CD14-positive monocyte (primary cell): ENCODE measurements at regions of chr16 and their contacts with region 1.

Region 1: DNA sequence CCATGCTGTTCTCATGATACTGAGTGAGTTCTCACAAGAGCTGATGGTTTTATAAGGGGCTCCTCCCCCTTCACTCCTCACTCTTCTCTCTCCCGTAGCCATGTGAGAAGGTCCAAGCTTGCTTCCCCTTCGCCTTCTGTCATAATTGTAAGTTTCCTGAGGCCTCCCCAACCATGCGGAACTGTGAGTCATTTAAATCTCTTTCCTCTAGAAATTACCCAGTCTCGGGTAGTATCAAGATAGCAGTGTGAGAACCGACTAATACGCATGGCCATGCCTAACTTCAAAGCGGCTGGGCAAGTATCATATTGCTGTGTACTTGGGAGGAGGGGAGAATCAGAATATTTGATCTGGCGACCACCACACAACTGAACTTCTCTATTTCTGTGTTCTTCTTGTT is 88.3 kb downstream of the PRKCB start:
- DNase-seq: peak; percentile 68 to 90 (median 73)
- H3K4me3 ChIP-seq: no peak overlapping the region
- H3K4me3 Mint-ChIP-seq: peak overlapping the region in 1 of 2 donors; percentile 18
- H3K27ac ChIP-seq: peak overlapping the region in 1 of 2 donors; percentile 63
- H3K27ac Mint-ChIP-seq: peak overlapping the region; percentile 67 to 85 (median 80)
- H3K4me1 ChIP-seq: peaks cover 21 to 27% of the 10 kb centered on the region in 2 donors
- H3K4me1 Mint-ChIP-seq: peaks cover 48% of the 10 kb centered on the region
- H3K27me3 ChIP-seq: no peaks in the 10 kb centered on the region
- H3K27me3 Mint-ChIP-seq: peaks cover 0 to 4% (median 2%) of the 10 kb centered on the region in 3 donors
- CTCF ChIP-seq: no peak

Region 2: GRCh38 chr16:23556881-23557778 is 367.0 kb before region 1 on chr16 and contains the starts of genes EARS2 and UBFD1:
- intact Hi-C with region 1: no loop called
- DNase-seq: peak; percentile 96 to 98 (median 97)
- H3K4me3 ChIP-seq: peak within 1 kb of the TSS; percentile 59 to 87 (median 70)
- H3K4me3 Mint-ChIP-seq: peak within 1 kb of the TSS; percentile 87 to 88
- H3K27ac ChIP-seq: peak within 1 kb of the TSS; percentile 47 to 82
- H3K27ac Mint-ChIP-seq: peak within 1 kb of the TSS; percentile 87 to 95 (median 91)
- H3K4me1 ChIP-seq: peaks cover 15 to 22% of the 10 kb centered on the region in 2 donors
- H3K4me1 Mint-ChIP-seq: peaks cover 21% of the 10 kb centered on the region
- H3K27me3 ChIP-seq: no peaks in the 10 kb centered on the region
- H3K27me3 Mint-ChIP-seq: peaks cover 0 to 2% (median 0%) of the 10 kb centered on the region in 3 donors
- CTCF ChIP-seq: peak; percentile 96
- polyA plus RNA-seq, gene EARS2: 2.9 to 4.7 (median 4.2) TPM
- polyA plus RNA-seq, gene UBFD1: 8.0 to 8.9 (median 8.0) TPM

Region 3: DNA sequence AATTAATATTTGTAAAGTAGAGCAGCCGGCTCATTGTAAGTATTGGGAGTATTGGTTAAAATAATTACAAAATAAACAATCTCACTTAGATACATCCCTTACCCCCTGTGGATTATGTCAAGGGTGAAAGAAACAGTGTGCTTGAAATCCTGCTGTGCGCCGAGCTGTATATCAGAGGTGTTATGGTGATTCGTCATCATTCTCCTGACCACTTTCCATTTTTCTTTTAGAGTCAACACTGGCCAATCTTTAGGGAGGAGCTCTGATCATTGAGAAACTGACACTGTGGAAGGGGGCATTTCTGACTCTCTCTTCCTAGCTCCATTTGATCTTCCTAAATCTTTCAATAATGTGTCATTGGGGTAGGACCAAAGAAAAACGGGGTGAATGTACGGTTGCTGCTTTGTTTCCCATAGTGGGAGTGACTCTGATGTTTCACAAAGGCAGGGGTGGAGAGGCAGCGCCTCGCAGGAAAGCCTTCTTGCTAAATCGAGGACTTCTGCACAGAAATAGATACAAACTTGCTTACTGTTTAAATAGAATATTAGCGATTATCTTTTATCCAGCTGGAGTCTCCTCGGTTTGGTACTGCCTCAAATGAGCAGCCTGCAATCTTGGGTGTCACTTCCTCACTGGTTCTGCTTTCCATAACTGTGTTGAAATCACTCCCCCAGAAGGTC is 35.1 kb after region 1 on chr16:
- intact Hi-C with region 1: loop called in 1 of 2 experiments (anchors 5 kb)
- DNase-seq: peak; percentile 56 to 78 (median 68)
- H3K4me3 ChIP-seq: peak overlapping the region in 2 of 3 experiments; percentile 37 to 57
- H3K4me3 Mint-ChIP-seq: peak overlapping the region; percentile 47 to 78
- H3K27ac ChIP-seq: peak overlapping the region; percentile 65 to 71
- H3K27ac Mint-ChIP-seq: peak overlapping the region; percentile 52 to 93 (median 88)
- H3K4me1 ChIP-seq: peaks cover 38 to 44% of the 10 kb centered on the region in 2 donors
- H3K4me1 Mint-ChIP-seq: peaks cover 53% of the 10 kb centered on the region
- H3K27me3 ChIP-seq: no peaks in the 10 kb centered on the region
- H3K27me3 Mint-ChIP-seq: peaks cover 0 to 1% (median 0%) of the 10 kb centered on the region in 3 donors
- CTCF ChIP-seq: no peak

Region 4: DNA sequence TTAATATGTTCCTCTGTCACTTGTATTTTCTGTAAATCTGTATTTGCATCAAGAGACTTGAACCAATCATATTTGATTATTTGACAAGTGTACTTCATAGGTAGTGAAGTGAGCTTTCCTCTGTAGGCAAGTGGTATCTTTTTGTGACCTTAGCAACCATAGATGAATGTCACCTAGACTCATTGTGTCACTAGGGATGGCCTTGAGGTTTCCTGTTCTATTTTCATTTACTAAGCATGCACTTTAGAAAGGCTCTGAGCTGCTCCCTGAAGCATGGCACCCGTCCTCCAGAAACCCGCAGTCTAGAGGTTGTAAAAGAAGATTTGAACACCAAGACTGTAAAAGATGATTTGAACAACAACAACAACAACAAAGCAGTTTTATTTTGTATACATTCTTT is 63.3 kb after region 1 on chr16:
- intact Hi-C with region 1: no loop called
- DNase-seq: no peak
- H3K4me3 ChIP-seq: no peak overlapping the region
- H3K4me3 Mint-ChIP-seq: no peak overlapping the region
- H3K27ac ChIP-seq: no peak overlapping the region
- H3K27ac Mint-ChIP-seq: no peak overlapping the region
- H3K4me1 ChIP-seq: no peaks in the 10 kb centered on the region
- H3K4me1 Mint-ChIP-seq: no peaks in the 10 kb centered on the region
- H3K27me3 ChIP-seq: no peaks in the 10 kb centered on the region
- H3K27me3 Mint-ChIP-seq: peaks cover 0 to 2% (median 0%) of the 10 kb centered on the region in 3 donors
- CTCF ChIP-seq: no peak